ENCODE measurements at regions of chr18 and their contacts with region 1.

Region 1: GRCh38 chr18:79528846-79529245 is 133.1 kb downstream of the NFATC1 start:
- DNase-seq: peak; percentile 83
- H3K4me3 Mint-ChIP-seq: no peak overlapping the region
- H3K27ac Mint-ChIP-seq: no peak overlapping the region
- H3K4me1 Mint-ChIP-seq: peaks cover 28% of the 10 kb centered on the region
- H3K27me3 Mint-ChIP-seq: peaks cover 11% of the 10 kb centered on the region

Region 2: GRCh38 chr18:79393635-79394533 is 135.0 kb before region 1 on chr18:
- CTCF ChIA-PET with region 1: interaction called, 37 read pairs
- DNase-seq: peak; percentile 63
- H3K4me3 Mint-ChIP-seq: peak overlapping the region; percentile 73
- H3K27ac Mint-ChIP-seq: no peak overlapping the region
- H3K4me1 Mint-ChIP-seq: peaks cover 42% of the 10 kb centered on the region
- H3K27me3 Mint-ChIP-seq: peaks cover 57% of the 10 kb centered on the region

Region 3: DNA sequence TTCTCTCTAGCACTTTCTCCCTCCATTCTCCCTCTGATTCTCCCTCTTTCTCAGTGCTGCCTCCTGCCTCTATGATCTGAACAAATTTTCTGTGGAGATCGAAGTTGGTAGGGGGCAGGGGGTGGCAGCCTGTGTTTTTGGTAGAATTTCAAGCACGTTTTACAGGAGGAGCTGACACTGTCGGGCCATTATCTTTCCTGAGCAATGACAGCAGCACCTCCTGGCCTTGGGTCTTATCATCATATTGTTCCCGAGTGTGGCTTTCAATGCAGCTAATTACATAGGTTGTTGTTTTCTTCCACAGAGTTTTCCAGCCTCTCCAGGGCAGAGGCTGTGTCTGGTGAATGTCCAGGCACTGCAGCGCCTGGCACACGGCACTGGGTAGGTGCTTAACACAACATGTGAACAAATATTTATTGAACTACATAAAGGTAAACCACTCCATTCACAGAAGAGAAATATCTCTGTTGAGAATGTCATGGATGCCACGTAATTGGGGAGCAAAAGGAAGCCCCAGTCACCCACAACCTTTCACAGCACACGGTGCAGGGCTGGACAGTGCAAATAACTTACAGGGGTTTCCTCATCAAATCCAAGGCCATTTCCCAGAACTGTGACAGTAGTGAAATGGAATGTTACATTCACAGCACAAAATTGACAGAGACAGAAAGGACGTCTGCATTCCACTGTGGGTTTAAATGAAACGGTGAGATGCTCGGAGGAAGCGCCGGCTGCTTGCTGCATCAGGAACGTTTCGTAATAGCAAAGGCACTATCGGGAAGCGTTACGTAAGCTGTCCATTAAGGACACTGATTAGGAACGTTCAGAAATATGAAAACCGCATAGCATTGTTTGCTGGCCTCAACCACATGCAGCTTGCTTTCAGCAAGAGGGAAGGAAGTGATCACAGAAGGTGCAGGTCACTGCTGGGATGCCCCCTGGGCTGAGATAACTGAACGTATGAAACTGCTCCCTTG is 262.4 kb after region 1 on chr18:
- CTCF ChIA-PET with region 1: no interaction called
- DNase-seq: no peak
- H3K4me3 Mint-ChIP-seq: no peak overlapping the region
- H3K27ac Mint-ChIP-seq: no peak overlapping the region
- H3K4me1 Mint-ChIP-seq: peaks cover 6% of the 10 kb centered on the region
- H3K27me3 Mint-ChIP-seq: peaks cover 87% of the 10 kb centered on the region

Measured in activated naive CD4-positive, alpha-beta T cell treated with anti-CD3 and anti-CD28 coated beads, Interleukin-2, amount 10 ng/mL, durations not matched to agents 7 days and 5 days (primary cell).